Lower leg skin (tissue), 4 donors: ENCODE measurements at regions of chr1 and their contacts with region 1.

Region 1: GRCh38 chr1:61049850-61050540 is 32.4 kb upstream of the NFIA start:
- DNase-seq: peak; percentile 94 to 99
- H3K4me3 ChIP-seq: peak overlapping the region; percentile 77
- CTCF ChIP-seq: peak in 1 of 3 donors; percentile 89
- POLR2A ChIP-seq: no peak

Region 2: DNA sequence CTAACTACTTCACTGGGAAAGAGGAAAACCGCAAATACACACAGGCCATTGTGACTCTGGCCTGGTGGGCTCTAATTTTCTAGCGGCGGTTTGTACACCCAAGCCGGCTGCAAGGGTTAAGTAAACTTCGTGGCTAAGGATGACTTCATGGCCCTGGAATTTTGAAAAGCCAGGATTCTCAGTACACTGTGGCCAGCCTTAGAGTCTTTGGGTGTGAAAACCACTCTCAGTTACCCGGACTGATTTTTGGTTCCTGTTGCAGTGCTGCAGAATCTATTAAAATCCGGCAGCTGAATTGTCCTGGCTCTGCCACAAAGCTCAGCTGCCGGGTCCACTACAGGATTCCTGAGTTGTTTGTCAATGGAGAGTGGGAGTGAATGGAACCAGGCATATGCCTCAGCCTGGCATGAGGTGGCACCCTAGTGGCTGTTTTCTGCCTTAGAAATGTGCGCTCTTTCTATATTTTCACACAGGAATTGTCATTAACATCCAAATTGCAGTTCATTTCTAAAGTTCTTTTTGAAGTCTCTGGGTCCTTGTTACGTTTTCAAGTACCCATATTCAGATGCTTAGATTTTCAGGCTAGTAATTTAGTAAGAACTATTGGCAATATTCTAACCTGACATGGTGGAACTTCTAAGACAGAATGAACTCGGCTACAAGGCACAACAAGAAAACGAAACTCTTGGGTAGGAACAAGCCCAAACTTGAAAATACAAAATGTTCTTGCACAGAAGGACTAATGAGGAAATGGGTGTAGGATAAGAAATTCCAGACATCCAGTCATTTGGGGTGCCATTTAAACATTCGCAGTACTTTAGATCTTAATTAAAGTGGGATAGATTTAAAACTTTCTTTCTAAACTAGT is 288.2 kb after region 1 on chr1:
- intact Hi-C with region 1: loop called (anchors 10 kb)
- DNase-seq: peak in 1 of 2 donors; percentile 67
- H3K4me3 ChIP-seq: no peak overlapping the region
- CTCF ChIP-seq: no peak
- POLR2A ChIP-seq: no peak

Region 3: DNA sequence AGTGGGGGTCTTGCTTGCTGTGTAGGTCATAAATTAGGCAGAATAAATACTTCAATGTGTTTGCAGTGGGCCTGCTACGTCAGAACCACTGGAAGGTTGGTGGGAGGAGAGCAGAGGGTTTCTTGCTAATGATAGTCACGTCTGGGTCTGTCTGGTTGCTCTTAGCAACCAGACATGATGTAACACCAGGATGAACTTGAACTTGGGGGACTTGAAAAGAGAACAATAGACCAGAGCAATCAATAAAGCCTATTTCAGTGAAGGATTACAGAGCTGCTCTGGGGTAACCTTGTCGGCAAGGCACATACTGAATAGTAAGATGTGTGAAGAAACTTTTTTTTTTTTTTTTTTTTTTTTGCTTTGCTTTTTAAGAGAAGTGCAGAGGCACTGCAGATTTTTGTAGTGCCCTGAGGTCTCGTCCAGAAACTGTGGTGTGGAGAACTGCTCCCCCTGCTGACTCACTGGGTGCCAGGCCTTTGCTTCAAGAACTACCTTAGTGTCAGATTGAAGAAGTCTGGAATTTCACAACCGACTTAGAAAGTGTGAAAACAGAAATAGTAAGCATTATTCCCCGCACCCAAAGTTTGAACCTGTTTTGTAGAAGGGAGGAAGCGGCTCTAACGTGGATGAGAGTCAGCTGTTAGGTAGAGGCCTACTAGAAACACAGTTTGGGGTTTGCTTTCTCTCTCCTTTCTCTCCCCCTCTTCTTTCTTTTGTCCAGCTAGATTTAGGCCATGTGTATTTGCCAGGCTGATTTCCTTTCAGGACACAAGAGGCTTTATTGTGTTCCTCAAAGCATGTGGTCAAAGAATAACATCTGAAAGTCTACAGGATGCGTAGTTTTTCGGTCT is 403.3 kb after region 1 on chr1:
- intact Hi-C with region 1: loop called (anchors 5 kb)
- DNase-seq: peak; percentile 92 to 97
- H3K4me3 ChIP-seq: no peak overlapping the region
- CTCF ChIP-seq: peak in 1 of 3 donors; percentile 95
- POLR2A ChIP-seq: no peak